ENCODE measurements at regions of chr6 and their contacts with region 1.

Region 1: DNA sequence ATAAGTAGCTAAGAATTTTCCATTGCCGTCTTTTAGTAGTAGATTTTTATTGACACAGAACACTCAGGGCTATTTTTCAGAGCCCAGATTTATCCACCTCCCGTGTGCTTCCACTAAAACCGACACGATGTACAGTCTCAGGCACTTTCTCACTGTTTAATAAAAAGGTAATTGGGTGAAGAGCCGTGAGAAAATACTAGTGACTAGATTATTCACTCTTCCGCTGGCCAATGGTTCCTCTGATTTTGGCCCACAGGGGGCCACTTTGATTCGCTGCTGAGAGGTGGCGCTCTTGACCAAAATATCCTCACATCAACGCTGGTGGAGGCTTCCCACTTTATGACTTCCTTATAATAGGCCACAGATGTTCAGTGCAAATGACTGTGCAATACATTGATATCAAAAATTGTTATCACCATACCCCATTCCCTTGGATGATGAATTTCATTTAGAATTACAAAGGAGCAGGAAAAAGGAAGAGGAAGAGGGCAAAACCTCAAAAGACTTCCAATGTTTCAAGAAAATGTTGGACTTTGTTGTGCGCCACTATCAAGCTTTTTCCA is 12.3 kb upstream of the HDDC2 start:
- DNase-seq: peak; percentile 58
- ATAC-seq: peak; percentile 65
- H3K4me3 Mint-ChIP-seq: no peak overlapping the region
- H3K27ac Mint-ChIP-seq: no peak overlapping the region
- H3K4me1 Mint-ChIP-seq: no peaks in the 10 kb centered on the region
- H3K27me3 Mint-ChIP-seq: peaks cover 11% of the 10 kb centered on the region

Region 2: DNA sequence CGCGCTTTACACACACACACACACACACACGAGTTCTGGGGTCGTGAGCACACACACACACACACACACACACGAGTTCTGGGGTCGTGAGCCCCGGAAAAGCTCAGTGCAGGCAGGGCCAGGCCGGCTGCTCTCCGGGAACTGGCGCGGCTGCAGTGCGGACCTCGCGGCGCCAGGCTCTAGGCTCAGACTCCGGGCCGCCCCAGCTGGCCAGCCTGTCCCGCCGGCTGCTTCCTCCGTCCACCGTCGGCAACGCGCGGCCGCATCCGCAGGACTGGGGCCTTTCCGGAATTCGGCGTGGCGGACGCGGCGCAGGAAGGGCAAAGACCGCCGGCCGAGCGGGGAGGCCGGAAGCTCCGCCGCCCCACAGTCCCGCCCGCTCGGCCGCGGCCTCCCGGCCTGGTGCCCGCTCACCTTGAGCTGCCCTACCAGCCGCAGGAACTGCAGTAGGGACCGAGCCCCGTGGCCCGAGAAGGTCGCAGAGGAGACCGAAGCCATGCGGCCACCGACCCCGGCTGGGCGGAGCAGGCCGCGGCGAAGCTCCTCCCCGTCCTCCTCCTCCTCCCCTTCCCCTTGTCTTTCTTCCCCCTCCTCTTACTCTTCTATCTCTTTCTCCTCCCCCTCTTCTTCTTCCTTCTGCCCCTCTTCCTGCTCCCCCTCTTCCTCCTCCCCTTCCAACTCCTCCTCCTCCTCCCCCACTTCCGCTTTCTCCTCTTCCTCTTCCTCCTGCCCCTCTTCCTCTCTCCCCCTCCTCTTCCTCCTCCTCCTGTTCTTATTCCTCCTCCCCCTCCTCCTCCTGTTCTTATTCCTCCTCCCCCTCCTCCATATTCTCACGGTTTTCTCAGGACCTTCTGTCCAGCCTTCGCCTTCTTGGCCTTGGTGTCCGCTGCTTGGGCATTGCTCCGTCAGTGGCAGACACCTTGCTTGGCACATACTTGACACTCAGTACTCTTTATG is 12.4 kb before region 1 on chr6 and contains the start of gene HDDC2:
- CTCF ChIA-PET with region 1: interaction called, 18 read pairs
- POLR2A ChIA-PET with region 1: no interaction called
- DNase-seq: peak; percentile 57
- ATAC-seq: peak; percentile 81
- H3K4me3 Mint-ChIP-seq: peak within 1 kb of the TSS; percentile 89
- H3K27ac Mint-ChIP-seq: peak within 1 kb of the TSS; percentile 91
- H3K4me1 Mint-ChIP-seq: peaks cover 44% of the 10 kb centered on the region
- H3K27me3 Mint-ChIP-seq: peaks cover 21% of the 10 kb centered on the region
- total RNA-seq, gene HDDC2: 61.7 to 69.8 TPM

Region 3: GRCh38 chr6:125749173-125749864 is 435.2 kb after region 1 on chr6 and contains the start of gene HEY2:
- CTCF ChIA-PET with region 1: interaction called, 60 read pairs
- POLR2A ChIA-PET with region 1: no interaction called
- DNase-seq: peak; percentile 83
- ATAC-seq: peak; percentile 82
- H3K4me3 Mint-ChIP-seq: peak within 1 kb of the TSS; percentile 79
- H3K27ac Mint-ChIP-seq: no peak within 1 kb of the TSS
- H3K4me1 Mint-ChIP-seq: peaks cover 39% of the 10 kb centered on the region
- H3K27me3 Mint-ChIP-seq: peaks cover 62% of the 10 kb centered on the region
- total RNA-seq, gene HEY2: not detected

Region 4: DNA sequence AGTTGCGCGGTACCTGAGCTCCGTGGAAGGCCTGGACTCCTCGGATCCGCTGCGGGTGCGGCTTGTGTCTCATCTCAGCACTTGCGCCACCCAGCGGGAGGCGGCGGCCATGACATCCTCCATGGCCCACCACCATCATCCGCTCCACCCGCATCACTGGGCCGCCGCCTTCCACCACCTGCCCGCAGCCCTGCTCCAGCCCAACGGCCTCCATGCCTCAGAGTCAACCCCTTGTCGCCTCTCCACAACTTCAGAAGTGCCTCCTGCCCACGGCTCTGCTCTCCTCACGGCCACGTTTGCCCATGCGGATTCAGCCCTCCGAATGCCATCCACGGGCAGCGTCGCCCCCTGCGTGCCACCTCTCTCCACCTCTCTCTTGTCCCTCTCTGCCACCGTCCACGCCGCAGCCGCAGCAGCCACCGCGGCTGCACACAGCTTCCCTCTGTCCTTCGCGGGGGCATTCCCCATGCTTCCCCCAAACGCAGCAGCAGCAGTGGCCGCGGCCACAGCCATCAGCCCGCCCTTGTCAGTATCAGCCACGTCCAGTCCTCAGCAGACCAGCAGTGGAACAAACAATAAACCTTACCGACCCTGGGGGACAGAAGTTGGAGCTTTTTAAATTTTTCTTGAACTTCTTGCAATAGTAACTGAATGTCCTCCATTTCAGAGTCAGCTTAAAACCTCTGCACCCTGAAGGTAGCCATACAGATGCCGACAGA is 445.2 kb after region 1 on chr6:
- CTCF ChIA-PET with region 1: interaction called, 60 read pairs
- POLR2A ChIA-PET with region 1: no interaction called
- DNase-seq: no peak
- ATAC-seq: no peak
- H3K4me3 Mint-ChIP-seq: no peak overlapping the region
- H3K27ac Mint-ChIP-seq: no peak overlapping the region
- H3K4me1 Mint-ChIP-seq: no peaks in the 10 kb centered on the region
- H3K27me3 Mint-ChIP-seq: peaks cover 49% of the 10 kb centered on the region

Measured in activated CD8-positive, alpha-beta T cell treated with anti-CD3 and anti-CD28 coated beads, Interleukin-2, amount 10 ng/mL, durations not matched to agents 7 days and 5 days (primary cell).